Right cardiac atrium (tissue), 5 donors: ENCODE measurements at regions of chr2 and their contacts with region 1.

Region 1: GRCh38 chr2:219119422-219120043 is 41.1 kb downstream of the NHEJ1 start:
- DNase-seq: peak; percentile 64 to 83 (median 65)
- ATAC-seq: peak; percentile 61 to 75
- H3K4me3 ChIP-seq: no peak overlapping the region
- H3K27ac ChIP-seq: no peak overlapping the region
- H3K4me1 ChIP-seq: peaks cover 6% of the 10 kb centered on the region
- H3K27me3 ChIP-seq: no peaks in the 10 kb centered on the region

Region 2: DNA sequence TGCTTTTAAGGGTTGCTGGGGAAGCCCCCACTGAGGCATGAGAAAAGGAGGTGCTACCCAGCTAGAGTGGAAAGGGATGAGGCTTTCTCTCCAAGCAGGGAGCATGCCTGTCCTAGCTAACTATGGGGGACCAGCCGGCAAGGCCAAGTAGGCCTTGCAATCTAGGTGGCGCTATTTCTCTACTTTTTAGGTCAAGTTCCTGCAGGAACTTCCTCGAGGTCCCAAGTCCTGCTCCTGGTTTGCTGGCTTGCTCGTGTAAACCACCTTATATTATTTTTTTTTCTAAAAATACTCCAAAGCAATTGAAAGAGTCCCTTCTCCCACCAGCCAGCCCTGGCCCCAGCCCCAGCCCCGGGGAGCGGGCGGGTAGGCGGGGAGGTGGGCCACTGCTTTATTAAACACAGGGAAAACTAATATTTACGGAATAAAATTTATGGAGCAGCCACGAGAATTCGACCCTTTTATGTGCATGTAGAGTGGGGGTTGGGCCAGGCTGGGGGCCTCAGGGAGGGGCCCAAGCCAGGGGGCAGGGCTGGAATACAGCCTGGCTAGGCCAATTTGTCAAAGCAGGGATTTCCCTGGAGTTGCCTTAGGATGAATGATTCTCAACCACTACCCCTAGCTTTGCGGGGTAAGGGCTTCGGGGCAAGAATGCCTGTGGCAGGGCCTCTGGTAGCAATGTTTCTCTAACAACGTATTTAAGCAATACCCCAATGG is 46.0 kb before region 1 on chr2:
- intact Hi-C with region 1: loop called in 1 of 4 experiments (anchors 5 kb)
- DNase-seq: no peak
- ATAC-seq: peak in 1 of 2 donors; percentile 46
- H3K4me3 ChIP-seq: no peak overlapping the region
- H3K27ac ChIP-seq: no peak overlapping the region
- H3K4me1 ChIP-seq: no peaks in the 10 kb centered on the region
- H3K27me3 ChIP-seq: no peaks in the 10 kb centered on the region